Lower lobe of right lung (tissue), 2 donors: ENCODE measurements at regions of chr10 and their contacts with region 1.

Region 1: DNA sequence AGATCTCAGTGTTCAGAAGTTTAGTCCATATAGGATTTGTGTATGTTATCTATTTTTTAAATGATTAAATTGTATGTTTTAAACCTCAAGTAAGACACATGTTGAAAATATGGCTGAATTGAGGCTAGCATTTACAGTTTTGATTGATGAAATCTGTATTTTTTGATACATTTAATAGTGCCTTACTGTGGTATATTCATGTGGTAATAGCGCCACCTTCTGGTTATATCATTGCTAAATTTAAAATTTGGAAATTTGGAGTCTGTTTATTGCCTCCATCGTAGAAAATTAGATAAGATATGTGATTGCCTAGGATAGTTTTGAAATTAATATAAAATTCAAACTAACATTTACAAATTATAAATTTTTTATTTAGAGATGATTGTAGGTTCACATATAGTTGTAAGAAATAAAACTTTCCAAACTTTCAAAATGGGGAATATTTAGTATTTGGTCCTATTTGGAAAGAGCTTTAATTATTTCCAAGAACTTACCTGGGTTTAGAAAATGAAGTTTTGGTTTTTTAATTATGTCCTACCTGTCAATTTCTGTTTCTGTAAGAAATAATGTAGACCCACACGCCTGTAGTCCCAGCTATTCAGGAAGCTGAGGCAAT is 19.1 kb upstream of the ARMS2 start:
- DNase-seq: no peak
- ATAC-seq: peak in 1 of 2 donors; percentile 64
- H3K4me3 ChIP-seq: no peak overlapping the region
- H3K27ac ChIP-seq: no peak overlapping the region
- H3K4me1 ChIP-seq: no peaks in the 10 kb centered on the region
- H3K27me3 ChIP-seq: no peaks in the 10 kb centered on the region
- CTCF ChIP-seq: peak; percentile 66

Region 2: GRCh38 chr10:122342293-122343134 is 92.8 kb before region 1 on chr10:
- intact Hi-C with region 1: loop called (anchors 5 kb)
- DNase-seq: no peak
- ATAC-seq: peak; percentile 71 to 73
- H3K4me3 ChIP-seq: no peak overlapping the region
- H3K27ac ChIP-seq: no peak overlapping the region
- H3K4me1 ChIP-seq: no peaks in the 10 kb centered on the region
- H3K27me3 ChIP-seq: no peaks in the 10 kb centered on the region
- CTCF ChIP-seq: peak; percentile 87